Naive thymus-derived CD4-positive, alpha-beta T cell (primary cell): ENCODE measurements at regions of chr1 and their contacts with region 1.

Region 1: DNA sequence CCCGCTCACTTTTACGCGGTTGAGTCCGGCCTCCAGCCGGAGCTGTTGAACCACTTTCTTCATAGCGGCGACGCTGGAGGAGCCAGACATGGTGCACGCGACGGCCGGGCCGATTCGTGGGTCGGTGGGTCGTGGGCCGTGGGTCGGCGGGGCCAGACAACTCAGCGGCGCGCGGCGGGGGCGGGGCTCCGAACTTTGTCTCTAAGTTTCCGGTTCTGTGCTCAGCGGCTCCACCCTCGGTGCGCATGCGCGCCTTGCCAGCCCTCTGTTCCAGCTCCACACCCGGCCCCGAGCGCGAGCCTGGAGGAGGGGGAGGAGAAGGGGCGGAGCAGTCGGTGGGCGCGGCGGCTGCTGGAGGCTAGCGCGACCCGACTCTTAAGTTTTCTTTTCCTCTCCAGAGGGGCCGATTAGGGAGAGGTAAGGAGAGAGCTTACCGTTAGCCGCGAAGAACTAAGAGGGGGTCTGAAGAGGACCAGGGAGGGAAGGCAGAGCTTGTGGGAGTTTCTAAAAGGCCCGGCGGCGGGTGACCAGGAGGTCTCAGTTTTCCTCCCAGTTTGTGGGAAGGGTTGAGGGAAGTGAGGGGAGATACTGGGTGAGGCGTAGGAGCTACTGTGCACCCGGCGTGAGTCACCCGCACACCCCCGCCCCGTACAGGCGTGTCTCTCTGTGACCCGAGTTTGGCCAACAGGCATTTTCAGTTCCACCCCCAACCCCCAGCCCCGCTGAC is at the starts of genes GNG5 and SPATA1:
- DNase-seq: peak; percentile 94 to 98 (median 96)
- ATAC-seq: peak; percentile 95
- H3K4me3 ChIP-seq: peak within 1 kb of the TSS; percentile 94
- H3K4me3 Mint-ChIP-seq: peak within 1 kb of the TSS; percentile 94 to 100 (median 98)
- H3K27ac ChIP-seq: peak within 1 kb of the TSS; percentile 76
- H3K27ac Mint-ChIP-seq: peak within 1 kb of the TSS; percentile 93 to 99 (median 96)
- H3K4me1 ChIP-seq: peaks cover 15 to 27% of the 10 kb centered on the region in 2 donors
- H3K4me1 Mint-ChIP-seq: peaks cover 18 to 54% (median 50%) of the 10 kb centered on the region in 7 donors
- H3K27me3 ChIP-seq: no peaks in the 10 kb centered on the region
- H3K27me3 Mint-ChIP-seq: peaks cover 0 to 2% (median 0%) of the 10 kb centered on the region in 5 donors
- total RNA-seq, gene GNG5: 24.8 to 90.7 (median 28.9) TPM
- total RNA-seq, gene SPATA1: 1.7 to 3.6 (median 2.2) TPM in 4 of 5 experiments, not detected in the other

Region 2: DNA sequence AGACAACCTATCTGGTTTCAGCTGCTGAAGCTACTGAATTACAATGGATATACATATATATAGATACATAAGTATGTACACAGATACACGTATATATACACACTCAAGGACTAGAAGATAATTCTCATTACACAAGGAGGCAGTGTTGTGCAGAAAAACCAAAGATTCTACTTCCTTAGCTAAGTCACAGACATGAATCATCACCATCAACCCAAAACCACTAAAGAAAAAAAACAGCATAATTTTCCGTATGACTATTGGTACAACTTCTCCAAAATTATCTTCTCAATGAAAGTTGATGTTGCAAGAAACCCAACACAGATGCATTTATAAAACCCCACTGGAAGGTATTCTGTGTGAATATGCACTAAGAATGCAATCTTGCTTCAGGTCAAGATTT is 63.9 kb before region 1 on chr1:
- CTCF ChIA-PET with region 1: interaction called, 4 read pairs
- POLR2A ChIA-PET with region 1: interaction called, 6 read pairs
- intact Hi-C with region 1: loop called (anchors 1 kb)
- DNase-seq: peak in 7 of 9 donors; percentile 51 to 77 (median 66)
- ATAC-seq: peak; percentile 99
- H3K4me3 ChIP-seq: no peak overlapping the region
- H3K4me3 Mint-ChIP-seq: peak overlapping the region; percentile 14 to 66 (median 41)
- H3K27ac ChIP-seq: no peak overlapping the region
- H3K27ac Mint-ChIP-seq: peak overlapping the region in 5 of 9 donors; percentile 35 to 81 (median 72)
- H3K4me1 ChIP-seq: peaks cover 10 to 21% of the 10 kb centered on the region in 2 donors
- H3K4me1 Mint-ChIP-seq: peaks cover 5 to 24% (median 16%) of the 10 kb centered on the region in 7 donors
- H3K27me3 ChIP-seq: no peaks in the 10 kb centered on the region
- H3K27me3 Mint-ChIP-seq: peaks cover 0 to 16% (median 11%) of the 10 kb centered on the region in 5 donors

Region 3: GRCh38 chr1:84492726-84493125 is 13.4 kb before region 1 on chr1:
- CTCF ChIA-PET with region 1: no interaction called
- POLR2A ChIA-PET with region 1: interaction called, 4 read pairs
- intact Hi-C with region 1: loop called in 1 of 2 experiments (anchors 1 kb)
- DNase-seq: no peak
- ATAC-seq: no peak
- H3K4me3 ChIP-seq: no peak overlapping the region
- H3K4me3 Mint-ChIP-seq: no peak overlapping the region
- H3K27ac ChIP-seq: no peak overlapping the region
- H3K27ac Mint-ChIP-seq: peak overlapping the region in 2 of 9 donors; percentile 15 to 63
- H3K4me1 ChIP-seq: no peaks in the 10 kb centered on the region
- H3K4me1 Mint-ChIP-seq: peaks cover 10 to 42% (median 30%) of the 10 kb centered on the region in 7 donors
- H3K27me3 ChIP-seq: no peaks in the 10 kb centered on the region
- H3K27me3 Mint-ChIP-seq: no peaks in the 10 kb centered on the region

Region 4: DNA sequence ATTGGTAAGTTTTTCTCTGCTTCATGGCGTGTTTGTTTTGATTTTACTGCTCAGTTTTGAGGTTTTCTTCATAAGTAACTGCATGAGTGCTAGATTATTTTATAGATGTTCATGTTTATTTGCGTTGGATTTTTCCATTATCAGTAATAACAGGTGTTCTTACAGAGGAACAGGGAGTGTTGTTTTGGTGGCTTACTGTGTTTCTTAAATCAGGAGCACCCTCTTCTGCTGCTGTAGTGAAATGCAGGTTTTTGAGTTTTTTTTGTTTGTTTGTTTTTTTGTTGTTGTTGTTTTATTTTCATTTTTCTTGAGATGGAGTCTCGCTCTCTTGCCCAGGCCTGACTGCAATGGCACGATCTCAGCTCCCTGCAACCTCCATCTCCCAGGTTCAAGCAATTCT is 35.5 kb after region 1 on chr1:
- CTCF ChIA-PET with region 1: interaction called, 3 read pairs
- POLR2A ChIA-PET with region 1: no interaction called
- intact Hi-C with region 1: loop called (anchors 2 to 5 kb)
- DNase-seq: peak in 2 of 9 donors; percentile 2 to 9
- ATAC-seq: no peak
- H3K4me3 ChIP-seq: no peak overlapping the region
- H3K4me3 Mint-ChIP-seq: no peak overlapping the region
- H3K27ac ChIP-seq: no peak overlapping the region
- H3K27ac Mint-ChIP-seq: peak overlapping the region in 1 of 9 donors; percentile 6
- H3K4me1 ChIP-seq: no peaks in the 10 kb centered on the region
- H3K4me1 Mint-ChIP-seq: peaks cover 0 to 26% (median 0%) of the 10 kb centered on the region in 7 donors
- H3K27me3 ChIP-seq: no peaks in the 10 kb centered on the region
- H3K27me3 Mint-ChIP-seq: no peaks in the 10 kb centered on the region

Region 5: DNA sequence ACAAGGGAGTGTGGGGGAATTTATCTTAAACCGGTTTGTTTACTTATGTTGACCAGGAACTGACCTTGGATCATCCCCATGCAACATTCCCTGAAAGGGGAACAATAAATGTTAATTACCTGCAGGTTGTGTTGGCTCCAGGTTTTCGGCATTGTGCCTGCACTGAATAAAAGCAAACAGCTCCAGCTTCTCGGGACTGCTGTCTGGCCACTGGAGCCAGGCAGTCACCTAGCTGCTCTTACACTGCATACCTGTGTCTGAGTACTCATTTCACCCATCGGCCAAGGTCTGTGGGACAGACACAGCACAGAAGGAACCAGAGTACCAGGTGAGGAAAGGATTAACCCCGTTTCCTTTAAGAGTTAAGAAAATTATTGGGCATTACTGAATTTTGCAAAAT is 100.8 kb after region 1 on chr1:
- CTCF ChIA-PET with region 1: no interaction called
- POLR2A ChIA-PET with region 1: no interaction called
- intact Hi-C with region 1: no loop called
- DNase-seq: no peak
- ATAC-seq: no peak
- H3K4me3 ChIP-seq: no peak overlapping the region
- H3K4me3 Mint-ChIP-seq: no peak overlapping the region
- H3K27ac ChIP-seq: no peak overlapping the region
- H3K27ac Mint-ChIP-seq: no peak overlapping the region
- H3K4me1 ChIP-seq: peaks cover 0 to 2% of the 10 kb centered on the region in 2 donors
- H3K4me1 Mint-ChIP-seq: peaks cover 2 to 13% (median 8%) of the 10 kb centered on the region in 7 donors
- H3K27me3 ChIP-seq: no peaks in the 10 kb centered on the region
- H3K27me3 Mint-ChIP-seq: peaks cover 0 to 5% (median 0%) of the 10 kb centered on the region in 5 donors

Region 6: DNA sequence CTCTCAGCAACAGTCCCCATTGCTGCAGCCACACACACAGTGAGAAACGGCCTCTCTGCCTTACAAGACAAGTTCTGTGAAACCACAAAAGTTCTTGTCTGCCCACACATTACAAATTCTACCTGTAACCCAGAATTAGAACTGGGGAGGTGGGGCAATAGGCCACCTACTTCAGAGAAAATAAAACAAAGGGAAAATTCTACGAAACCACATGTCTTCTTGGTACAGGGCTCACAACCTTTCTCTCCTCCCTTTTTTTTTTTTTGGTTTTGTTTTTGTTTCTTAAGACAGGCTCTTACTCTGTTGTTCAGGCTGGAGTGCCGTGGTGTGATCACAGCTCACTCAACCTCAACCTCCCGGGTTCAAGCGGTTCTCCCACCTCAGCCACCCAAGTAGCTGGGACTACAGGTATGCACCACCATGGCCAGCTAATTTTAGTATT is 356.7 kb after region 1 on chr1:
- CTCF ChIA-PET with region 1: no interaction called
- POLR2A ChIA-PET with region 1: no interaction called
- intact Hi-C with region 1: loop called in 1 of 2 experiments (anchors 5 kb)
- DNase-seq: peak in 8 of 9 donors; percentile 42 to 81 (median 66)
- ATAC-seq: peak; percentile 87
- H3K4me3 ChIP-seq: peak overlapping the region; percentile 44
- H3K4me3 Mint-ChIP-seq: peak overlapping the region; percentile 71 to 89 (median 83)
- H3K27ac ChIP-seq: peak overlapping the region; percentile 67
- H3K27ac Mint-ChIP-seq: peak overlapping the region; percentile 83 to 95 (median 92)
- H3K4me1 ChIP-seq: peaks cover 30 to 46% of the 10 kb centered on the region in 2 donors
- H3K4me1 Mint-ChIP-seq: peaks cover 31 to 69% (median 59%) of the 10 kb centered on the region in 7 donors
- H3K27me3 ChIP-seq: no peaks in the 10 kb centered on the region
- H3K27me3 Mint-ChIP-seq: peaks cover 0 to 6% (median 0%) of the 10 kb centered on the region in 5 donors